Common myeloid progenitor, CD34-positive (primary cell): ENCODE measurements at regions of chr16 and their contacts with region 1.

Region 1: GRCh38 chr16:1363501-1364041 is 11.8 kb downstream of the GNPTG start:
- DNase-seq: peak; percentile 51 to 75 (median 73)
- H3K4me3 ChIP-seq: no peak overlapping the region
- H3K27ac ChIP-seq: no peak overlapping the region
- H3K4me1 ChIP-seq: no peaks in the 10 kb centered on the region
- H3K27me3 ChIP-seq: no peaks in the 10 kb centered on the region

Region 2: DNA sequence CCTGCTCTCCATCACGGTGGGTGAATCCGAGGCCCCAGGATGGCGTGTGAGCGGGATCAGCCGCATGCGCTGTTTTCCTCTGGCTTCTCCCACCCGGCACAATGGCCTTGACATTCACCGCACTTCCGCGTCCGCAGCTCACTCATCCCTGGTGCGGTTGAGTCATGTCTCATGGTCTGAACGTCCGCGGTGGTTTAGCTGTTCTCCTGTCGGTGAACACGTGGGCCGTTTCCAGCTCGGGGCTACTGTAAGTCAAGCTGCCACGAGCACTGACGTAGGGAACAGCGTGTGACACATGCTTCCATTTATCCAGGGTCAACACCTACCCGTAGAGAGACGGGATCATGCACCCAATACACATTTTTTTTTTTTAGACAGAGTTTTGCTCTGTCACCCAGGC is 226.0 kb before region 1 on chr16:
- CTCF ChIA-PET with region 1: no interaction called
- POLR2A ChIA-PET with region 1: no interaction called
- DNase-seq: no peak
- H3K4me3 ChIP-seq: no peak overlapping the region
- H3K27ac ChIP-seq: no peak overlapping the region
- H3K4me1 ChIP-seq: no peaks in the 10 kb centered on the region
- H3K27me3 ChIP-seq: peaks cover 0 to 30% (median 3%) of the 10 kb centered on the region in 5 experiments

Region 3: DNA sequence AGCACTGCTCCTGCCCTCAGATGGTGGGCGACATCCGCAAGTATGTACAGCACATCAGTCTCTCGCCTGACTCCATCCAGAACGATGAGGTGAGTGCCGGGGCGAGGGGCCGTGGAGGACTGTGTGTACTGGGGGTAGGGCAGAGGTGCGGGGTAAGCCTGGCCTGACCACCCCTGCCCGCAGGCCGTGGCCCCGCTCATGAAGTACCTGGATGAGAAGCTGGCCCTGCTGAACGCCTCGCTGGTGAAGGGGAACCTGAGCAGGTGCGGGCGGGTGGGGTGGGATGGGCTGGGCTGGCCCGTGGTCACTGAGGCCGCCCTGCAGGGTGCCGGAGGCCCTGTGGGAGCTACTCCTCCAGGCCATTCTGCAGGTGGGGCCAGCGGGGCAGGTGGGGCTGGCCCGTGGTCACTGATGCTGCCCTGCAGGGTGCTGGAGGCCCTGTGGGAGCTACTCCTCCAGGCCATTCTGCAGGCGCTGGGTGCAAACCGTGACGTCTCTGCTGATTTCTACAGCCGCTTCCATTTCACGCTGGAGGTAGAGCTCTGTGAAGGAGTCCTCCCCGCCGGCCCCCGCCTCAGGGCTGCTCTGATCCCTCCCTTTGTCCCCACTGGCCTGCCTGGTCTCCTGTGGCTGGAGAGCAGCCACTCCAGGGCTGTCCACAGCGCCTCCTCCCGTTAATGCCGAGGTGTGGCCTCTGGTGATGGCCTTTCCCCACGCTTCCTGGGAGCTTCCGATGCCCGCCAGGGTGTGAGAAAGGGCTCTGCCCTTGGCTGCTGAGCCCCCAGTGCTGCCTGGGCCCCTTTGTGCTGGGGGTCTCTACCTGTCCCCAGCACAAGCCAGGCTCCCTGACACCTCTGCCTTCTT is 16.9 kb before region 1 on chr16:
- CTCF ChIA-PET with region 1: interaction called, 17 read pairs
- POLR2A ChIA-PET with region 1: no interaction called
- DNase-seq: no peak
- H3K4me3 ChIP-seq: no peak overlapping the region
- H3K27ac ChIP-seq: no peak overlapping the region
- H3K4me1 ChIP-seq: peaks cover 2 to 31% (median 28%) of the 10 kb centered on the region in 4 experiments
- H3K27me3 ChIP-seq: no peaks in the 10 kb centered on the region

Region 4: GRCh38 chr16:1378804-1379303 is 15.3 kb after region 1 on chr16:
- CTCF ChIA-PET with region 1: interaction called, 26 read pairs
- POLR2A ChIA-PET with region 1: interaction called, 6 read pairs
- DNase-seq: peak; percentile 82 to 93 (median 92)
- H3K4me3 ChIP-seq: peak overlapping the region; percentile 11 to 72 (median 54)
- H3K27ac ChIP-seq: peak overlapping the region in 1 of 2 experiments; percentile 84
- H3K4me1 ChIP-seq: peaks cover 0 to 26% (median 21%) of the 10 kb centered on the region in 4 experiments
- H3K27me3 ChIP-seq: no peaks in the 10 kb centered on the region